Activated T-helper 2 cell treated with anti-CD3 and anti-CD28 coated beads, Interferon-gamma antibody, Interleukin-2, Interleukin-4, amounts not matched to agents 10 μg/mL and 5 μg/mL and 100 μg/mL, durations not matched to agents 14 hours and 24 hours and 36 hours (primary cell): ENCODE measurements at regions of chr9 and their contacts with region 1.

Region 1: GRCh38 chr9:4228606-4229005 is 71.3 kb downstream of the GLIS3 start:
- DNase-seq: no peak
- H3K4me3 Mint-ChIP-seq: no peak overlapping the region
- H3K27ac Mint-ChIP-seq: no peak overlapping the region
- H3K4me1 Mint-ChIP-seq: peaks cover 19% of the 10 kb centered on the region
- H3K27me3 Mint-ChIP-seq: no peaks in the 10 kb centered on the region

Region 2: DNA sequence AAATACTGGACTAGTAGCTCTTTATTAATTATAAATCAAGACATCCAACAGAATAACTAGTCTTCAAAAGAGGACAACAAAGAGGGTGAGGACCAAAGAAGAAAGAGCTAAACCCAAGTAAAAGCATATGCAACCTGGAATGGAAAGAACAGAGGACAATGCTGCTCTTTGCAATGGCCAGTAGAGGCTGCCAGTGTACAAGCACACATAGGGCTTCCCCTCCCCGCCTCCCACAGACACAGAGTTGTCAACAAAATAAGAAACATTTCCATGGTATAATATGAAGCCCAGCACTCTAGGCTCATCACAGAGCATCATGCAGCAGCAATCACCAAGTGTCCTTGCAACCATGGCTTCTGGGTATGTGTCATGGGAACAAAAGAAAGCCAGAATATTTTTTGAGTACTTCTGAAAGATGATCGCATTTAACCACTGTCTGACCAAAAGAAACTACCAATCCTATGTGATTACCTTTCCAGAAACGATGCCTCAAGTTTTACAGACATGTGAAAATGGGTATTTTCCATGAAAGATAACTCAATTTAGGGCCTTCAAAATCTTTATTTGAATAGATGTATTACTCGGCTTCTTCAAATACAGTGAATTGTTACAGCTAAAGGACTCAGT is 760.9 kb before region 1 on chr9:
- intact Hi-C with region 1: loop called (anchors 5 kb)
- DNase-seq: peak; percentile 41
- H3K4me3 Mint-ChIP-seq: no peak overlapping the region
- H3K27ac Mint-ChIP-seq: no peak overlapping the region
- H3K4me1 Mint-ChIP-seq: peaks cover 7% of the 10 kb centered on the region
- H3K27me3 Mint-ChIP-seq: no peaks in the 10 kb centered on the region

Region 3: DNA sequence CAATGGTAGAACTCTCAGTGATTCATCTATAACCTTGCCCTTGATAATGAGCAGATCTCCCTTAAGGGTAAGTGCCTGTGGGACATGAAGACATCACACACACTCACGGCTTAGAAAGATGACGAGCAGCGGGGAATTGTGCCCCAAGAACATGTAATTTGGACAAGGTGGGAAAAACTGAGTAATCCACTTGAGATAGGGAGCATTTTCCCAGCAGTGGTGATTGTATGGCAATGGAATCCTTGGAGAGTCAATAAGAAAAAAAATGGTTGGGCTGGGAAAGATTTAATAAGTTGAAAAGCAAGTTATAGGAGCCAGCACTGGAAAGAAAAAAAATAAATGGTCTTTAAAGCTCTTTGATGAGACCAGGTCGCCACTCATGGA is 121.9 kb before region 1 on chr9:
- intact Hi-C with region 1: loop called (anchors 10 kb)
- DNase-seq: no peak
- H3K4me3 Mint-ChIP-seq: no peak overlapping the region
- H3K27ac Mint-ChIP-seq: no peak overlapping the region
- H3K4me1 Mint-ChIP-seq: no peaks in the 10 kb centered on the region
- H3K27me3 Mint-ChIP-seq: no peaks in the 10 kb centered on the region

Region 4: DNA sequence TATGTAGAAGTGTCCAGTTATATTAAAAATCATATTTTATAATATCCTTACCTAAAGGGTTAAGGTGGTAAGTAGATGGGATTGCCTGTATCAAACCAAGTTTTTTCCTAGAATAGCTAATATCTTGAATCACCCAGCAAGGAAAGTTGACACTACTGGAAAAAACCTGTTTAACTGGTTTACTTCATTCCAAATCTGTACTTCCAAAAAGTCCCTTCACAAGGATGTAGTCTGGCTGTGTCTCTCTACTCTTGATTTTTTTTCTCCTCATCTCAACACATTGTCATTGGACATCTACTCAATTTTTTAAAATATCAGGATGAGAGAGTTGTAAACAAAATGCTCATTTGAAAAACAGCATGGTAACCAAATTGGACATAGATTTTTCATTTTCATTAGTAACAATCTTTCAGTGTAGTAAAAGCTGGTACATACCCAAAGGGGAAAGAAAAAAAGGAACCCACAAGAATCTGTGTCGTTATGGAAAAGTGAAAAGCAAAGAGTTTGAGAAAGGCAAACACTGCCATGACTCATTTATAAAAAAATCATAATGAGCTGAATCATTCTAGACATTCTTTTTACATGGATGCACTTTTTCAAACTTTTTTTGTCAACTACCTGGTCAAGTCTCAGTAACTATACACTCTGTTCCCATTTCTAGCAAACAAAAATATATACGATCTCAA is 102.3 kb before region 1 on chr9:
- intact Hi-C with region 1: no loop called
- DNase-seq: no peak
- H3K4me3 Mint-ChIP-seq: no peak overlapping the region
- H3K27ac Mint-ChIP-seq: no peak overlapping the region
- H3K4me1 Mint-ChIP-seq: no peaks in the 10 kb centered on the region
- H3K27me3 Mint-ChIP-seq: peaks cover 3% of the 10 kb centered on the region

Region 5: DNA sequence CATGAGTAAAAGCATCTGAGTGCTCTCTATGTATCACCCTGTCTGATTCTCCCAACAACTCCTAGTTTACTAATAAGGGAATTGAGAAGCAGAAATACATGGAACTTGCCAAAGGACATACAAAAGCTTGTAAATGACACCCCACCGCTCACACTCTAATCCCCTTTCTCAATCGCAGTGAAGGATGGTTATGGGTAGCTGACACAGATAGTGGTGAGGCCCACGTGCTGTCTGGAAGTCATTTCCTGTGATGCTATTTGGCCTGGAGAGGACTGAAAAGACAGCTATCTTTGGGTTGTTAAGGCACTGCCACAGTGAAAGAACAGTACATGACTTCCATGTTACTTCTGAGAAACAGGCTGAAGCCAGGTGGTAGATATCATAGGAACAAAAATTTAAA is 45.8 kb before region 1 on chr9:
- intact Hi-C with region 1: no loop called
- DNase-seq: no peak
- H3K4me3 Mint-ChIP-seq: no peak overlapping the region
- H3K27ac Mint-ChIP-seq: no peak overlapping the region
- H3K4me1 Mint-ChIP-seq: no peaks in the 10 kb centered on the region
- H3K27me3 Mint-ChIP-seq: no peaks in the 10 kb centered on the region

Region 6: GRCh38 chr9:4297151-4297785 is 68.7 kb after region 1 on chr9:
- intact Hi-C with region 1: loop called (anchors 5 kb)
- DNase-seq: peak; percentile 22
- H3K4me3 Mint-ChIP-seq: peak overlapping the region; percentile 97
- H3K27ac Mint-ChIP-seq: peak overlapping the region; percentile 87
- H3K4me1 Mint-ChIP-seq: peaks cover 49% of the 10 kb centered on the region
- H3K27me3 Mint-ChIP-seq: peaks cover 56% of the 10 kb centered on the region